ENCODE measurements at regions of chr17 and their contacts with region 1.

Region 1: DNA sequence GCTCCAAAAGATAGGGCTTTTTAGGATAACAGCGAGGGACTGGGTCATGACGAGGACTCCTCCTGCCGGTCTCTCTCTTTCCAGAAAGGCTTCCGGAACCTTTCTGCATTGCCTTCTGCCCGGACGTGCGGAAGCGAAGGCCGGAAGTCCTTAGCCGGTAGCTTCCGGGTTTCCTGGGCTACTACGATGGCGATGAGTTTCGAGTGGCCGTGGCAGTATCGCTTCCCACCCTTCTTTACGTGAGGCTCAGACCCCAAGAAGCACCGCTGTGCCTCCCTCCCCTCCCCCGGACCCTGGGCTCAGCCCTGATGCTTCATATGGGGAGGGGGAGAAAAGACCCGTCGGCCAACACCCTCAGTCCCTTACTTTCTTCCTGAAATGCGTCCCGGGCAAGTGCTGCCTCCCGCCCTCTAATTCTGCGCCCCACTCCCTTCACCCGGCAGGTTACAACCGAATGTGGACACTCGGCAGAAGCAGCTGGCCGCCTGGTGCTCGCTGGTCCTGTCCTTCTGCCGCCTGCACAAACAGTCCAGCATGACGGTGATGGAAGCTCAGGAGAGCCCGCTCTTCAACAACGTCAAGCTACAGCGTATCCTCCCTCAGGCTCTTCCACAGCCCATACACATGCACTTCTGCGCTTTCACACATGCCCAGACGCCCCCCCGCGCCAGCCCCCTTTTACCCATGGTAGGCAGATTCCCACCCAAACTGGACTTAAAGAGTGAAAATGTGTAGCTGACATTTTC is at the start of gene VPS25:
- DNase-seq: peak; percentile 56 to 87 (median 72)
- ATAC-seq: peak; percentile 97 to 98
- H3K4me3 Mint-ChIP-seq: peak within 1 kb of the TSS; percentile 97 to 100 (median 99)
- H3K27ac Mint-ChIP-seq: peak within 1 kb of the TSS; percentile 97 to 100 (median 99)
- H3K4me1 Mint-ChIP-seq: peaks cover 18 to 24% (median 23%) of the 10 kb centered on the region in 4 donors
- H3K27me3 Mint-ChIP-seq: peaks cover 0 to 4% (median 2%) of the 10 kb centered on the region in 5 donors
- polyA plus RNA-seq, gene VPS25: 43.9 to 64.5 (median 56.3) TPM

Region 2: DNA sequence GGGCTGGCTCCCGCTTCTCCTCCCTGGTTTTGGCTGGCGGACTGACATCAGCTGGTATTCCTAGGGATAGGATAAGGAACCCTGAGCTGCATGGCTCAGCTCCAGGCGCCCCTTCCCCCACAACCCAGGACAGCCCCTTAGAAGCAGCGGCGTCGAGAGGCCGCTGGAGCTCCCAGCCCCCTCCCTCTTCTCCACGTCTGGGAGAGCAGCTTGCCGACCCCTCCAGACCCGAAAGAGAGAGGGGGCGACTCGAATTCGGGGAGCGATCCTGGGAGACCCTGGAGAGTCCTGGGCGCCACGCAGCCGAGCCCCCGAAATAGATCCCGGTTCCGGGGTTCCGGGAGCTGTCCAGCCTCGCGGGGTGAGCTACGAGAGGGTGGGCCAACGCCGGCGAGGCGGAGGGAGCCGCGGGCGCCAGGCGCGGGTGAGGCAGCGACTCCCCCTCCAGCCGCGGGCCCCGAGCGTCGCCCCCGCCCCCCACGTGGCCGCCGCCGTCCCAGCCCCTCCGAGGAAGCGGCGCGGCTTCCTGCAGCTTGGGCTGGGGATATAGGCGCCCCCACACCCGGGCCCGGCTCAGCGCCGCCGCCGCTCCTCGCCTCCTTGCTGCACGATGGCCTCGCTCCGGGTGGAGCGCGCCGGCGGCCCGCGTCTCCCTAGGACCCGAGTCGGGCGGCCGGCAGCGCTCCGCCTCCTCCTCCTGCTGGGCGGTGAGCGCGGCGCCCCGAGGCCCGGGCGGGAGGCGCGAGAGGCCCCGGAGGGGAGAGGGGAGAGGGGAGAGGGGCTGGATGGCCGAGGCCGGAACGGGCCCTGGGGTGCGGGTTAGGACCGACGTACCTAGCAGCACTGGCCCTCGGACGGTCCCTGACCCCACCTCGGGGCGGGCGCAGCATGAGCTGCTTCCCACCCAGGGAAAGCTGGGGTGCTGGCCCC is 12.5 kb before region 1 on chr17 and contains the start of gene RAMP2:
- POLR2A ChIA-PET with region 1: interaction called, 13 read pairs
- DNase-seq: peak in 5 of 10 donors; percentile 6 to 34 (median 30)
- ATAC-seq: peak; percentile 69 to 77
- H3K4me3 Mint-ChIP-seq: peak within 1 kb of the TSS; percentile 50 to 72 (median 65)
- H3K27ac Mint-ChIP-seq: peak within 1 kb of the TSS in 2 of 10 donors; percentile 32 to 70
- H3K4me1 Mint-ChIP-seq: peaks cover 3 to 16% (median 14%) of the 10 kb centered on the region in 4 donors
- H3K27me3 Mint-ChIP-seq: peaks cover 43 to 80% (median 50%) of the 10 kb centered on the region in 5 donors
- polyA plus RNA-seq, gene RAMP2: not detected

Region 3: GRCh38 chr17:42798383-42799380 is 25.2 kb after region 1 on chr17 and contains the starts of genes CNTD1 and COA3:
- POLR2A ChIA-PET with region 1: interaction called, 12 read pairs
- DNase-seq: peak; percentile 55 to 85 (median 66)
- ATAC-seq: peak; percentile 99
- H3K4me3 Mint-ChIP-seq: peak within 1 kb of the TSS; percentile 92 to 98 (median 96)
- H3K27ac Mint-ChIP-seq: peak within 1 kb of the TSS; percentile 68 to 95 (median 91)
- H3K4me1 Mint-ChIP-seq: peaks cover 21 to 45% (median 31%) of the 10 kb centered on the region in 4 donors
- H3K27me3 Mint-ChIP-seq: no peaks in the 10 kb centered on the region
- polyA plus RNA-seq, gene CNTD1: 0.12 to 0.52 (median 0.24) TPM
- polyA plus RNA-seq, gene COA3: 106 to 119 (median 118) TPM

Region 4: GRCh38 chr17:42809250-42809649 is 35.8 kb after region 1 on chr17:
- POLR2A ChIA-PET with region 1: no interaction called
- DNase-seq: no peak
- ATAC-seq: no peak
- H3K4me3 Mint-ChIP-seq: no peak overlapping the region
- H3K27ac Mint-ChIP-seq: peak overlapping the region in 3 of 10 donors; percentile 13 to 47 (median 24)
- H3K4me1 Mint-ChIP-seq: no peaks in the 10 kb centered on the region
- H3K27me3 Mint-ChIP-seq: no peaks in the 10 kb centered on the region

Region 5: GRCh38 chr17:42832974-42833766 is 59.7 kb after region 1 on chr17 and contains the start of gene PSME3:
- POLR2A ChIA-PET with region 1: interaction called, 10 read pairs
- DNase-seq: peak; percentile 80 to 95 (median 88)
- ATAC-seq: peak; percentile 92 to 96
- H3K4me3 Mint-ChIP-seq: peak within 1 kb of the TSS; percentile 92 to 98 (median 96)
- H3K27ac Mint-ChIP-seq: peak within 1 kb of the TSS; percentile 94 to 100 (median 100)
- H3K4me1 Mint-ChIP-seq: peaks cover 19 to 31% (median 29%) of the 10 kb centered on the region in 4 donors
- H3K27me3 Mint-ChIP-seq: no peaks in the 10 kb centered on the region
- polyA plus RNA-seq, gene PSME3: 117 to 123 (median 120) TPM

Measured in naive thymus-derived CD8-positive, alpha-beta T cell (primary cell).